ENCODE measurements at regions of chr6 and their contacts with region 1.

Region 1: GRCh38 chr6:57190140-57190539 is 18.0 kb downstream of the BAG2 start:
- DNase-seq: peak in 1 of 2 experiments; percentile 29
- H3K4me3 ChIP-seq: no peak overlapping the region
- H3K4me3 Mint-ChIP-seq: no peak overlapping the region
- H3K27ac Mint-ChIP-seq: no peak overlapping the region
- H3K4me1 ChIP-seq: no peaks in the 10 kb centered on the region
- H3K4me1 Mint-ChIP-seq: no peaks in the 10 kb centered on the region
- H3K27me3 ChIP-seq: no peaks in the 10 kb centered on the region
- H3K27me3 Mint-ChIP-seq: no peaks in the 10 kb centered on the region
- CTCF ChIP-seq: peak; percentile 31 to 58

Region 2: DNA sequence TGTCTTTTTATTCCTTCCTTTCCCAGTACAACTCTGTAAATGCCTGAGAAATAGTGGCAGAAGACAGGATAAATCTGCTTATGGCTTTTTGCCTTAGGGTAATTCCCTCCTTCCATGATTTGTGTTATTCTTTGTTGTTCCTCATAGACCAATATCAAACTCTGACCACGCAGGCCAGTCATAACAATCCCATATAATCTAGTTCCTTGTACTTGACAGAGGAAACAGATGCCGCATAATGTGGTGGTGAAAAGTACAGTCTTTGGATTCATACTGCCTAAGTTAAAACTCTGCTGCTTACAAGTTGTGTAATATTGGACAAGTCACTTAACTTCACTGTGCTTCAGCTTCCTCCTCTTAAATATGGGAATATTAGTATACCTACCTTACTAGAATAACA is 26.2 kb before region 1 on chr6:
- CTCF ChIA-PET with region 1: no interaction called
- POLR2A ChIA-PET with region 1: no interaction called
- intact Hi-C with region 1: no loop called
- DNase-seq: no peak
- H3K4me3 ChIP-seq: no peak overlapping the region
- H3K4me3 Mint-ChIP-seq: no peak overlapping the region
- H3K27ac Mint-ChIP-seq: no peak overlapping the region
- H3K4me1 ChIP-seq: no peaks in the 10 kb centered on the region
- H3K4me1 Mint-ChIP-seq: no peaks in the 10 kb centered on the region
- H3K27me3 ChIP-seq: no peaks in the 10 kb centered on the region
- H3K27me3 Mint-ChIP-seq: no peaks in the 10 kb centered on the region
- CTCF ChIP-seq: no peak

Region 3: DNA sequence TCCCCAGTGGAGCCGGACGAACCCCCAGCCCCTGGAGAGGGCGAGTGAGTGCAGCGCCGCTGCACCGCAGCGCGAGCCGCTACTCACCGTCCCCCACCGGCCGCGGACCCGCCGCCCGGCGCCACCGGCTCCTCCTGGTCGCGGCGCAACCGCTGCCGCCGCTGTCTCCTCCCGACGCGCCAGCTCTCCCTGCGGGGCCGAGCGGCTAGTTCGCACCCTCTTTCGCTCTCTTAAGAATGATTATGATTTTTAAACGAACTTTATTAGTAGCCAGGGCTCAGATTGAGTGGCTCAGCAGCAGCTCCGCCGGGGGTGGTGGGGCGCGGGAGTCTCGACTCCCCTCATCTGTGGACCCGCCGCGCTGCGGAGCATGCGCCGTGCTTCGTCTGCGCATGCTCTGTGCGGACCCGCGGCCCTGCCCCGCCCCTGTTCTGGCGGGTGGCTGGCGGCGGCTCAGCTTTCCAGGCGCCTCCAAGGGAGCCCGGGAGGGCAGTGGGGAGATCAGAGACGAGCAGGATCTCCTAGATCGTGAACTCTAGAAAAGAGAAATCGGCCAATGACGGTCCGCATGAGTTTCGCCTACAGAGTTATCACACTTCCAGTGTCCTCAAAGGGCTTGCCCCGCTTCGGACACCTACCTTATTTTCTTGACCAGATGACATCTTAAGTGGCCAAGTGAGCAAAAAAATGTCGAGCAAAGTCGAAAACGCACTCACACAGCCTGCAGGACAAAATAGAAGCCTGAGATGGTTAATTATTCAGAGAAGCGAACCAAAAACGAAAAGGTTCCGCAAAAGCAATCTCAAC is 32.0 kb after region 1 on chr6 and contains the start of gene RAB23:
- CTCF ChIA-PET with region 1: interaction called, 4 read pairs
- POLR2A ChIA-PET with region 1: no interaction called
- intact Hi-C with region 1: loop called (anchors 1 kb)
- DNase-seq: peak; percentile 81 to 93
- H3K4me3 ChIP-seq: peak within 1 kb of the TSS; percentile 78
- H3K4me3 Mint-ChIP-seq: peak within 1 kb of the TSS; percentile 94
- H3K27ac Mint-ChIP-seq: peak within 1 kb of the TSS; percentile 90
- H3K4me1 ChIP-seq: peaks cover 4% of the 10 kb centered on the region; the same call in 1 of the 2 replicates
- H3K4me1 Mint-ChIP-seq: peaks cover 10% of the 10 kb centered on the region
- H3K27me3 ChIP-seq: no peaks in the 10 kb centered on the region
- H3K27me3 Mint-ChIP-seq: no peaks in the 10 kb centered on the region
- CTCF ChIP-seq: no peak
- total RNA-seq, gene RAB23: 12.6 and 13.7 TPM in 2 replicates

Region 4: DNA sequence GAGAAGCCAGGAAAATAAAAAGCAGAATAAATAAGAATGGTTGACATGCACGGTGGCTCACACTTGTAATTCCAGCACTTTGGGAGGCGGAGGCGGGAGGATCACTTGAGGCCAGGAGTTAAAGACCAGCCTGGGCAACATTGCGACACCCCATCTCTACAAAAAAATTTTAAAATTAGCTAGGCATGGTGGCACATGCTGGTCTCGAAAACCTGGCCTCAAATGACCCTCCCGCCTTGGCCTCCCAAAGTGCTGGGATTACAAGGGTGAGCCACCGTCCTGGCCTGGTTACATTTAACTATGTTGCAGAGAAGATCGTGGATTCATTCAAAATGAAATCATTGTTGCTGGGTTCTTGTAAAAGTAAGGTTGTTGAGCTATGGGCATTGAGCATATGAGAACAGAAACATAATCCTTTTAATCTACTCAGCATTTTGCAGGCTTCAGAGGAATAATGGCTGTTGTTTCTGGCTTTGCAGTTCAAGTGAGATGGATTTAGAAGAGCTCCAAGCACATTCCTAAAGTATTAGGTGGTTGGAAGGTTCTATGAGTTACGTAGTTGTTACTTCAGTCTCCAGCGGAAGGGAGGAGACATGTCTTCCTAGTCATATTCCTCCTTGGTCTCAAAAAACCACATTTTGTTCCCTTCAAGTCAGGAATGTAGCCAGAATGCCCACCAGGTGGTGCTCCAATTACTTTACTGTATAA is 77.6 kb after region 1 on chr6:
- CTCF ChIA-PET with region 1: no interaction called
- POLR2A ChIA-PET with region 1: no interaction called
- intact Hi-C with region 1: loop called (anchors 5 kb)
- DNase-seq: peak; percentile 42 to 66
- H3K4me3 ChIP-seq: no peak overlapping the region
- H3K4me3 Mint-ChIP-seq: no peak overlapping the region
- H3K27ac Mint-ChIP-seq: no peak overlapping the region
- H3K4me1 ChIP-seq: no peaks in the 10 kb centered on the region
- H3K4me1 Mint-ChIP-seq: no peaks in the 10 kb centered on the region
- H3K27me3 ChIP-seq: no peaks in the 10 kb centered on the region
- H3K27me3 Mint-ChIP-seq: peaks cover 2% of the 10 kb centered on the region
- CTCF ChIP-seq: peak; percentile 61 to 64

Measured in Caco-2 (cell line).